HepG2 (cell line): ENCODE measurements at regions of chr9 and their contacts with region 1.

Region 1: DNA sequence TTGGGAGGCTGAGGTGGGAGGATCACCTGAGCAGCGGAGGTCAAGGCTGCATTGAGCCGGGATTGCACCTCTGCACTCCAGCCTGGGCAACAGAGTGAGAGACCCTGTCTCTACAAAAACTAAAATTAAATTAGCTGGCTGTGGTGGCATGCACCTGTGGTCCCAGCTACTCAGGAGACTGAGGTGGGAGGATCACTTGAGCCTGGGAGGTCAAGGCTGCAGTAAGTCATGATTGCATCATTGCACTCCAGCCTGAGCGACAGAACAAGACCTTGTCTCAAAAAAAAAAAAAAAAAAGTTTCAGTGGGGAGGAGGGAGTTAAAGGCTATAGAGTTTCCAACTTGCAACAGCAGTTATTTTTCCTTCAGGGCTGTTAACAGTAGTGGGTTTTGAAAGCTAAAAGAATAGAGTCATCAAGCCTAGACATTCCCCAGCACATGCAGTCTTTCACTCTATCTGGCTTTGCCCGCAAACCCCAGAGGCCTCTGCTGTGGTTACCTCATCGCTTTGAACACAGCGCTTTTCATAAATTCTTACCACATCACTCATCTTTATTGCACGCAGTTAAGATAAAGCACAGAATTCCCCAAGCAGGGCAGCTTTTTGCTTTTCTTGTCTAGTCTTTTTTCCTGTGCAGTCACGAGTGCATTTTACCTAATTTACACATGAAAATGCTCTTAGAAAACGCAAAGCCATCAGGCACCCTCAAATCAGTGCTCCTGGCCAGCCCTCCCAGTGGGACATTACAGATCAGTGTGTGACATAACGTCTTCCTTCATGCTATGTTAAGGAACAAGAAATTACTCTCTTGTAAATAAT is 8.7 kb upstream of the SLC2A8 start:
- DNase-seq: peak; percentile 96
- ATAC-seq: peak; percentile 90
- H3K4me3 ChIP-seq: peak overlapping the region; percentile 13 to 42 (median 23); a peak in 4 of 6 replicates
- H3K27ac ChIP-seq: peak overlapping the region; percentile 92
- H3K4me1 ChIP-seq: peaks cover 60% of the 10 kb centered on the region
- H3K27me3 ChIP-seq: no peaks in the 10 kb centered on the region
- CTCF ChIP-seq: no peak
- EP300 ChIP-seq: peak; percentile 87 to 90
- POLR2A ChIP-seq: peak in 1 of 2 experiments; percentile 50; a peak in 2 of 4 replicates
- RAD21 ChIP-seq: no peak

Region 2: DNA sequence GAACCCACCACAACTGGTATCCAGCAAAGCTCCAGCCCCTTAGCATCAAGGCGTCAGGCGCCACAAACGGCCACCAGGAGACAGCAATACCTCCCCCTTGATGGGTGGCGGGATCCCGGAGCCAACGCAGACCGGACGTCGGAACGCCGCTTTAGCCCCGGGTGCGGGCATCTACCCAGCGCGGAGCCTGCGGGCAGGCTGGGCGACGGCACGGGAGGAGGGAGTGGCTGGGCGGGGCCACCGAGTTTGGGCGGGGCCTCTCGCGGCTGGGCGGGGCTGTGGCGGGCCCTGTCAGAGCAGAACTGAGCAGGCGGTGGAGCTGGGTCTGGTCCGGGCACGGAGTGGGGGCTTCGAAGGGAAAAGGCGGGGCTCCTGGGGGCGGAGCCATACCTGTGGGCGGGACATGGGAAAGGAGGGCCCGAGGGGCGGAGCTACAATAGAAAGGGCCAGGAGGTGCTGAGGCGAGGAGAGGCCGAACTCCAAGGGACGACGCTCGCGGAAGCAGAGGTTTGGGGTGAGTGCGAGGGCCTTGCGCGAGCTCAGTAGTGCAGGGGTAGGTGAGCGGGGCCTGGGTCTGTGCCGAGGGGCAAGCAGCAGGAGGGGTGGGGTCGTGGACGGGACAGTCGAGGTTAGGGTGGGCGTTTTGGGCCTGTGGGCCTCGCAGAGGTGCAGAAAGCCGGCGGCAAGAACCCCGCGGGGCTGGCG is 163.9 kb before region 1 on chr9:
- CTCF ChIA-PET with region 1: no interaction called
- POLR2A ChIA-PET with region 1: interaction called, 10 read pairs
- in situ Hi-C with region 1: no loop called
- intact Hi-C with region 1: no loop called
- DNase-seq: peak; percentile 85
- ATAC-seq: peak; percentile 87
- H3K4me3 ChIP-seq: peak overlapping the region; percentile 62 to 92 (median 70)
- H3K27ac ChIP-seq: peak overlapping the region; percentile 79
- H3K4me1 ChIP-seq: peaks cover 27% of the 10 kb centered on the region
- H3K27me3 ChIP-seq: peaks cover 0 to 4% of the 10 kb centered on the region in 2 experiments; a peak in 2 of 5 replicates
- CTCF ChIP-seq: peak; percentile 41; the same call in 1 of the 2 replicates
- EP300 ChIP-seq: no peak
- POLR2A ChIP-seq: peak; percentile 35 to 69; a peak in 3 of 4 replicates
- RAD21 ChIP-seq: no peak

Region 3: GRCh38 chr9:127406799-127407509 is 18.7 kb after region 1 on chr9:
- CTCF ChIA-PET with region 1: no interaction called
- POLR2A ChIA-PET with region 1: interaction called, 14 read pairs
- in situ Hi-C with region 1: no loop called
- intact Hi-C with region 1: no loop called
- DNase-seq: no peak
- ATAC-seq: peak; percentile 53
- H3K4me3 ChIP-seq: no peak overlapping the region
- H3K27ac ChIP-seq: no peak overlapping the region
- H3K4me1 ChIP-seq: no peaks in the 10 kb centered on the region
- H3K27me3 ChIP-seq: no peaks in the 10 kb centered on the region
- CTCF ChIP-seq: no peak
- EP300 ChIP-seq: no peak
- POLR2A ChIP-seq: no peak; a peak in 1 of 4 replicates
- RAD21 ChIP-seq: 0 out of 2 replicates have a peak, but pooled peaks have one; percentile 19

Region 4: DNA sequence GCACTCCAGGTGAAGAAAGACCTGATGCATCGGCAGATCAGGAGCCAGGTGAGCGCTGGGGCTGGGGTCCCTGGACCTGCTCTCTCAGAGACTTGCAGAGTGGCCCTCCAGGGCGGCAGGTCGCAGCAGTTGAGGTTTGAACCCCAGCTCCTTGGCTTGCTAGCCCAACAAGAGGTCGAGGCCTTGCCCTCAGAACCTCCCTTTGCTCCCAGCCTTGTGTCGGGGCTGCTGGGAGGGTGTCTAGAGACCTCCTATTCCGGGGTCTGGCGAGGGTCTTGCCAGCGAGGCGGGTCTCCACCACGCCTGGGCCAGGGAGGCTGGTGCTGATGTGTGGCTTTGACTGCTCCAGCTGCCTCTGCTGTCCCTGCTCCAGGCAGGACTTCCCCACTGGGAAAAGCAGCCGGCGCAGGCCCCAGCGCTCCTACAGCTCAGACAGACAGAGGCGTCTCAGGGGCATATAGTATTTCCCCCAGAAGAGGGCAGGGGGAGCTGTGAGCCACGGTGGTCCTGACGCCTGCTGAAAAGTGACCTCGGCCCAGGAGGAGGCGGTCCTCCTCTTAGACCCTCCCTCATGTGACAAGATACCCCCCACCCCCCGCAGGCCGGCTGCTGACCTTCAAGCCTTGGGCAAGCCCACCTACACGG is 101.3 kb after region 1 on chr9:
- CTCF ChIA-PET with region 1: no interaction called
- POLR2A ChIA-PET with region 1: no interaction called
- in situ Hi-C with region 1: no loop called
- intact Hi-C with region 1: no loop called
- DNase-seq: no peak
- ATAC-seq: peak; percentile 29; the same call in 2 of the 3 replicates
- H3K4me3 ChIP-seq: no peak overlapping the region
- H3K27ac ChIP-seq: no peak overlapping the region
- H3K4me1 ChIP-seq: no peaks in the 10 kb centered on the region
- H3K27me3 ChIP-seq: no peaks in the 10 kb centered on the region
- CTCF ChIP-seq: no peak
- EP300 ChIP-seq: no peak
- POLR2A ChIP-seq: no peak
- RAD21 ChIP-seq: no peak

Region 5: DNA sequence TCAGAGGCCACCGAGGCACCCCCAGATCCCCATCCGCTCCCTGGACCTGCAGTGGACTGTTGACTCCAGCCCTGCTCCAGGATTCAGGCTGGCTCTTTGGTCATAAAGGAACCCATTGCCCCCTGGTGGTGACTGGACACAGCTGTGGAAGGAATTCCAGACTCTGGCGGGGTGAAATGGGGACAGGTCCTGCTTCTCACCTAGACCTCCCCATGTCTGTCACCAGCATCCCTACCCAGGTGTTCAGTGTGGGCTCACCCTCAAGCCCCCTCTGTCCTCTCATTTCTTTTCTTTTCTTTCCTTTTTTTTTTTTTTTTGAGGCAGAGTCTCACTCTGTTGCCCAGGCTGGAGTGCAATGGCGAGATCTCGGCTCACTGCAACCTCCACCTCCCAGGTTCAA is 198.3 kb after region 1 on chr9:
- CTCF ChIA-PET with region 1: no interaction called
- POLR2A ChIA-PET with region 1: no interaction called
- in situ Hi-C with region 1: no loop called
- intact Hi-C with region 1: no loop called
- DNase-seq: peak; percentile 75
- ATAC-seq: peak; percentile 94
- H3K4me3 ChIP-seq: no peak overlapping the region
- H3K27ac ChIP-seq: no peak overlapping the region
- H3K4me1 ChIP-seq: peaks cover 25% of the 10 kb centered on the region
- H3K27me3 ChIP-seq: no peaks in the 10 kb centered on the region
- CTCF ChIP-seq: peak; percentile 96
- EP300 ChIP-seq: no peak
- POLR2A ChIP-seq: no peak
- RAD21 ChIP-seq: peak; percentile 90